ENCODE measurements at regions of chr12 and their contacts with region 1.

Region 1: DNA sequence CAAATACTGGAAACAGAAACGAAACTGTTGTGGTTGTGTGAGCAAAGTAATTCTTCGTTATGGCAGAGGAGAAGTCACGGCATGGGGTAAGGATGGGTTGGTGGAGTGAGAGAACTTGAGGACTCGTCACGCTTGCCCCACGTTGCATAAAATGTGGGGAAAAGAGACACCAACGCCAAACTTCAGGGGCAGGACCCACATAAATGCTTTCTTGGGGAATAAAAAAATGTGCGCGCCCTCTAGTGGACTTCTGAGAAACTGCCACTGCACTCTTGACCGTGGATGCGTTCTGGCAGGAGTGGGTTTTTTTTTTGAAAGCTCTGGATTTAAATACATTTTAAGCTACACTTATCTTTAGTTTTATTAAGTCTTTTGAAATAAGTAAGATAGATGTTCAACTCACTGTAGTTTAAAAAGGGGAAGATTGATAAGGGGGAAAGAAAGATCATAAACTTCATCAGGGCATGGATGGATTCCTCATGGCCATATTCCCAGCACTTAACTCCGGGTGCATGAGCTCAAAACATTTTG is 4.1 kb upstream of the IGF1 start:
- DNase-seq: peak; percentile 55 to 61
- ATAC-seq: peak in 1 of 2 experiments; percentile 82; a peak in 3 of 6 replicates
- H3K4me3 ChIP-seq: no peak overlapping the region
- H3K27ac ChIP-seq: peak overlapping the region in 1 of 2 experiments; percentile 54; a peak in 2 of 6 replicates
- H3K4me1 ChIP-seq: 0 out of 3 replicates have a peak, but pooled peaks cover 3% of the 10 kb centered on the region
- CTCF ChIP-seq: peak; percentile 81
- EP300 ChIP-seq: no peak
- POLR2A ChIP-seq: no peak
- RAD21 ChIP-seq: peak; percentile 67 to 76

Region 2: DNA sequence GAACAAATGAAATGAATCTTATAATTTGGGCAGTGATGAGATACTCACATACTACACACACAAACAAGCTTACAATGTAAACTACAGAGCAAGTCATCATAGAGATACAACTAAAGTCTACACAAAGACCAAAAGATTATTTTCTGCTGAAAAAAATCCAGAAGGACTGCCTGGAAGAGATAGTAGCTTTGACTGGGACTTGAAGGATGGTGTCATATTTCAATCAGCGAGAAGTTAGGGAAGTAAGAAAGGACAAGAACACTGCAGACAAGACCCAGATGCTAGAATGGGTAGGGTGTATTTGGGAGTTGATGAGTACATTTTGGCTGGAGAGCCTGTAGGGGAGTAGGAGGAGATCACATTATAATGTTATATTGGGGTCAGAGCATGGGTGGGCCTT is 506.3 kb before region 1 on chr12:
- CTCF ChIA-PET with region 1: no interaction called
- POLR2A ChIA-PET with region 1: no interaction called
- DNase-seq: no peak
- ATAC-seq: no peak
- H3K4me3 ChIP-seq: no peak overlapping the region
- H3K27ac ChIP-seq: no peak overlapping the region
- H3K4me1 ChIP-seq: no peaks in the 10 kb centered on the region
- CTCF ChIP-seq: no peak
- EP300 ChIP-seq: no peak
- POLR2A ChIP-seq: no peak
- RAD21 ChIP-seq: no peak

Region 3: DNA sequence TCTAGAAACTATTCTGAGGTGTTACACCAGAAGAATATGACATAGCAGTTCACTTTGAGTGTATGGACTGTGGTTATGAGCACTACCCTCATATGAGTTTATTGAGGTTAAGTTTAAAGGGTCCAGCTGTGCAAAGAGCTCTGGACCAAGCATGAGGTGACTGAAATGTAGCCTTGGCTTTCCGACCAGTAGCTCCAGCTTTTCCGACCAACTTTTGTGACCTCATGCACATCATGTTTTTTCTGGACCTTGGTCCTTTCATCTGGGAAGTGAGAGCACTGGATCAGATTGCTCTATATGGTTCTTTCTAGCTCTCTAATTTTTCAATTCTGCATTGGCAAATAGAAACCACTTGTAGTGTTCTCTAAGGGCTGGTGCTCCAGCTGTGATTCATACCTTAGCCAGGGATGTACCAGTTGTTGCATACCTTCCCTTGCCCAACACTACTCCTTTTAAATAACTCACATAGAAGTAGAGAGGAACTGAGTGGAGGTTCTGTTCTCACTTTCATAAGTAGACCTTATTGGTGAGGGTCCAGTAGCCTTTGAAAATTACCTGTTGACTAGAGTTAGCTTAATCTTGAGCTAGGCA is 20.7 kb before region 1 on chr12:
- CTCF ChIA-PET with region 1: interaction called, 31 read pairs
- POLR2A ChIA-PET with region 1: no interaction called
- DNase-seq: no peak
- ATAC-seq: no peak
- H3K4me3 ChIP-seq: no peak overlapping the region
- H3K27ac ChIP-seq: no peak overlapping the region
- H3K4me1 ChIP-seq: no peaks in the 10 kb centered on the region
- CTCF ChIP-seq: no peak
- EP300 ChIP-seq: no peak
- POLR2A ChIP-seq: no peak
- RAD21 ChIP-seq: no peak